Posterior cingulate gyrus (tissue), 11 donors: ENCODE measurements at regions of chrX and their contacts with region 1.

Region 1: DNA sequence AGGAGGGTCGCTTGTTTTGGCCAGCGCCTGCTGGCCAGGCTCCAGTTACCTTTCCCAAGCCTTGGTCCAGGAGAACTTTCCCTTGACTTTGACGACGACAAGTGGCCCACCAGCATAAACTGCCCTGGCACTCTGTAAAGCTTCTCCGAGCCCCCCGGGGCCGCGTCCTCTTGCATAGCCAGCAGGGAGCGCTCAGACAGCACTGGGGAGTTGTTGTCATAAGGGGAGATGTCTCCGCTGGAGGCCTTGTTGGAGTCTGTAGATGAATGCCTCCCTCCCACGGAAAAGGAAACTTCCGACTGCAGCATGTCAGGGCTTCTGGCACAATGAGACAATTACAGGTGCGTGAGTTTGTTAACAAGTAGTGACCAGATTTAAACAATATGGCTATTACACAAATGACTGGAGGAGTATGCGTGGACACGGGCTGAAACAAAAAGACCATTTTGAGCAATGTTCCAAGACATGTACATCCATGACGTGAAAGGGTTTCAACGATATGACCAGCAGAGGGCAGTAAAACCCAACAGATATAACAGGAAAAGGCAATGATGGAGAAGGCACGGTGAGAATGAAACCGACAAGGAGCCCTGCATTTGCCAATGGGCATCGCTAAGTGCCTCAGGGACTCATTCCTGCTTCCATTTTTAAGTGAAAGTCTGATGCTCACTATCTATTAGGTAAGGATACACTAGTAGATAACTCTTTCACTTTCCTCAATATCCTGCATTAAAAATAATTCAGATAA is 33.0 kb downstream of the HCCS start:
- DNase-seq: peak in 5 of 10 donors; percentile 14 to 66 (median 37)

Region 2: DNA sequence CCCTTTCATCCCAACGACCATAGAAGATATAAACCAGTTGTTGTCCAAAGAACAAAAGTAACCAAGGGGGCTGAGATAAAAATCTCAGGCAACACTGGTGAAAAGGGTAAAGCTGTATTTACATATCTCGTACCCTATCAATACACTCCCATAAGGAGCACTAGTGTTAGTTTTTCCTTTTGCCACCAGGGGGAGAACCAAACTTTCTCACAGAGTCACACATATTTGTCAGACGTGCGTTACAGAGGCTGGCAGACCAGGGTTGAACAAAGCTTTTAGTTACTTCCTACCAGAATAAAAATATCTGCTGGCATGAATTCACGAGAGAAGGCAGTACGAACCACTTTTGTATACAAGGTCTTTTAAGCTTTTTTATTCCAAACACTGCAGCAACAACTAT is 237.4 kb after region 1 on chrX:
- intact Hi-C with region 1: loop called (anchors 10 kb)
- DNase-seq: no peak

Region 3: GRCh38 chrX:11770320-11770719 is 626.2 kb after region 1 on chrX:
- intact Hi-C with region 1: loop called (anchors 10 kb)
- DNase-seq: peak in 4 of 10 donors; percentile 19 to 86 (median 24)